ENCODE measurements at regions of chr18 and their contacts with region 1.

Region 1: DNA sequence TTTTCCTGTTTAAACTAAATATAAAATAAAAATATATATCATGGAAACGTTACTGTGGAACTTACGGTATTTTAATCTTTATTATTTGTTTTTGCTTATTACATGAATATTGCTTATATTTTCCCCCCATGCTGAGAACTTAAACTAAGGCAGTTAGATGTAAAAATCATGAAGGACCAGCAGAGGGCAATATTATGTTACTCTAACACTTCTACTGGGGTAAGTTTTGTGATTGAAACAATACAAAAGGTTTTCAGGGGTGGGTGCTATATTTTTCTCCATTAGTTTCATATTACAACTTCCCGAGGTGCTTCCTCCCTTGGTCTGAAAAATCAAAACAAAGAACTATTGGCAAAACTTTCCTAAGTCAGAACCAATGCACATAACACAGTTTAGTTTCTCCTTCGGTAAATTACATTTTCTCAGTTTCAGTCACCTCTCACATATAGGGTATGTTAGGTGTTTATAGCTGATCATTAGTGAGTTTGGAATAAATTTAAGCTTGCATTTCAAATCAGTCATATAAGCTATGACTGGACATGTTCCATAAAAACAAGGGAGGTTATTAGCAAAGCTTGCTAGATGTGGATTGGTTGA is 54.8 kb downstream of the ZNF407 start:
- DNase-seq: no peak
- H3K4me3 Mint-ChIP-seq: no peak overlapping the region
- H3K27ac Mint-ChIP-seq: no peak overlapping the region
- H3K4me1 Mint-ChIP-seq: no peaks in the 10 kb centered on the region
- H3K27me3 Mint-ChIP-seq: no peaks in the 10 kb centered on the region

Region 2: GRCh38 chr18:74806700-74807416 is 154.4 kb after region 1 on chr18:
- intact Hi-C with region 1: loop called (anchors 10 kb)
- DNase-seq: no peak
- H3K4me3 Mint-ChIP-seq: no peak overlapping the region
- H3K27ac Mint-ChIP-seq: no peak overlapping the region
- H3K4me1 Mint-ChIP-seq: peaks cover 9% of the 10 kb centered on the region
- H3K27me3 Mint-ChIP-seq: no peaks in the 10 kb centered on the region

Region 3: DNA sequence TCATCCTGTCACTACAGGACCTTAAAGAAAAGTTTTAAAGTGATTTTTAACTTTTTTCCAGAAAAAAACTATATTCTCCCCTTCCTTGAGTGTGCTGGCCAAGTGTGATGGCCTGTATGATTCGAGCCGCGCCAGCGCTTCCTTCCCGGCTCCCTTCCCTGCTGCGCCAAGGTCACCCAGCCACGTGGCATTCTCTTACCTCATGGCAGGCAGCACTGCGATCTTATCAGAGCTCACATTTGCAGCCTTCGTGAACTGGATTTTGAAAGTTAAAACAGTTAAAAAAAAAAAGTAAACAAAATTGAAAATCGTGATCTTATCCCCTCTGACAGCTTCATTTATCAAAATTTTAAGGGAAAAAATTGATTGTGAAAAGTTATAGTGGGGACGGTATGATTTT is 276.6 kb after region 1 on chr18:
- intact Hi-C with region 1: no loop called
- DNase-seq: no peak
- H3K4me3 Mint-ChIP-seq: no peak overlapping the region
- H3K27ac Mint-ChIP-seq: no peak overlapping the region
- H3K4me1 Mint-ChIP-seq: no peaks in the 10 kb centered on the region
- H3K27me3 Mint-ChIP-seq: no peaks in the 10 kb centered on the region

Region 4: DNA sequence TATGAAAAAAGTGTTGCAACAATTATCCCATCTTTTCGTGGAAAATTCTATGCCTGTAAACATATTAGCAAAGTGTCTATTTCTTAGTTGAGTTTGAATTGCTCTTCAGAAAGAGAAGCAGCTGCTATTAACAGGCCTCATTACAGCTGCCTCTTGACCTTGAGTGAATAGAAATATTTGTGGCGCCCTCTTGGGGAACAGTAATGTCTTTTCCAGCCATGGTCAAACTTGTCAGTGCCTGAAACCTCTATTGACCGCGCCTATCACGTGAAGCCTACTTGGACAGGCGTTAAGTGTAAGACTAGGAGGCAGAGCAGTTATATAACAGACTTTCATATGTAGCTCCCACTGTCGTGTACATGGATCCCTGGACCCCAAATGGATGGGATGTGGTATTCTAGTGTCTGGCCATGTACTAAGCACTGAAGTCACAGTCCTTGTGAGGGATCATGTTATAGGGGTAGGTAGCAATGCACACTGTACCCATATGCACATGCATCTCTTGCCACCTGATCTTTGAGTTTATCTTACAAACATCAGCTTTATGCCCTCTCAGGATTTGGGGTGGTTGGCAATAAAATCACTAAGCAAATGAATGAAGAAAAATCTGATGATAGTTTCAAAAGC is 311.4 kb after region 1 on chr18:
- intact Hi-C with region 1: loop called (anchors 2 kb)
- DNase-seq: peak; percentile 70
- H3K4me3 Mint-ChIP-seq: no peak overlapping the region
- H3K27ac Mint-ChIP-seq: no peak overlapping the region
- H3K4me1 Mint-ChIP-seq: no peaks in the 10 kb centered on the region
- H3K27me3 Mint-ChIP-seq: no peaks in the 10 kb centered on the region

Region 5: DNA sequence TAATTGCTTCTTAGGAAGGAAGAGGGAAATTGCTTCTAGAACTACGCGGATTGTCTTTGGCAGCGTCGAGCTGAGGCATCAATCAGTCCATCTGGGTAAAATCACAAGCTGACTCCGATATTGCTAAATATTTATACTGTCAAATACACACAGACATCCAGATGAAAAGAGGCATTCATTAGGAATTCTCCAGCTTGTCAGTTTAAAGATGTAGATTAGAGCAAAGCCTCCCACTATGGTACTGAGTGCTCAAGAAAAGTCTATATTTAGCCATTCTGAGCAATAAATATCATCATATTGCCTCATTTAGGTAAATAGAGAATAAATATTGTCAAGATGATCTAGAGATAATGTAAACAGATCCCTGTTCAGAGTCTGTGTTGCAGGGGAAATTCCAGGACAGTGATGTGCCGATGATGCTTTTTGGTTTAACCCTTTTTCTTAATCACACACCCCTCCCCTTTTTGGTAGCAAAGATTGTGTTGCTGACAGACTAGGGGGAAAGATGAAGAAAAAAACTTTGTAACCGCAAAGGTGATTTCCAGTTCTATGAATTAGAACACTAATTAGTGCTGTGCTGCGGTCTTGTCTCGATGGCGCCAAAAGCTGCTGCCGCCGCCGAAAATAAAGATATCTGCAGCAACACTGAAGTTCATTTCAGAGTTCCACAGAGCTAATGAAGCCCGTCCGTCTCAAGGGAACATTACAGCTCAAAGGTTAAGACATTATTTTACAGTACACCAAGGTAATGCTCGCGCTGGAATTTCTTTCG is 384.6 kb after region 1 on chr18:
- intact Hi-C with region 1: loop called (anchors 5 kb)
- DNase-seq: no peak
- H3K4me3 Mint-ChIP-seq: no peak overlapping the region
- H3K27ac Mint-ChIP-seq: no peak overlapping the region
- H3K4me1 Mint-ChIP-seq: peaks cover 2% of the 10 kb centered on the region
- H3K27me3 Mint-ChIP-seq: no peaks in the 10 kb centered on the region

Region 6: DNA sequence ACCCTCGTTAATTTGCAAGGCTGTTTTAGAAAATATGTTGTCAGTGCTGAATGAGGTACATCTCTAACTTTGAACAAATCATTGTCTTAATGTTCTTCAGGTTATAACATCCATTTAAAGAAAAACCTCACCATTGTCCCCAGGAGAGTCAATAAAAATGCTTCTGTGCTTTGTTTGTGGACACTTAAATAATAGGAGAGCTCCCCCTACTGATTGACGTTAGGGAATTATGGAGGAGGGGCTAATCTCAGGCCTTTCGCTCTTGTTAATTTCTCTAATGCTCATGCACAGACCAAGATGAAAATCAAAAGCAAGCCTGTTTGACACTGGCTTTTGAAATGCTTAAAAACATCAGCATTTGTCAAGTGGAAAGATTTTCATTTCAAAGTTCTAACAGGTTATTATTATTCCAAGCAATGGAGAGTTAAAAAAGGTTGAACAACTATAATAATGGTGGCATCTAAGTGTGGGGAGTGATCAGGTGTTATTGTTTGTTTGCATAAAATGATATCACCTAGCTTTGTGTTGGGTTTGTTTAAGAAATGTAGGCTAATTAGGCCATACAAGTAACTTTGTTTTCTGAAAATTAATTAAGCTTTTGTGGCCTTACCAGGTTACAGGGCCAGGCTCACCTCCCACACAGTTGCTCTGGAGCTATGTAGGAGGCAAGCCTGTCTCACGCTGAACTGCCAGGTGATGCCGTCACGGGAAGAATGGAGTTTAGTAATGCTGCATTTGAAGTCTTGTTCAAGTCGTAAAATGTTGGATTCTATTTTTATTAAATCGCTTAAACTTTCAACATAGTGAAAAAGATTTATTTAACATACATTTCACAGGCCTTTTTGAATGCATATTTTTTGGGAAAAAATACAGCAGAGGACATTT is 826.7 kb after region 1 on chr18:
- intact Hi-C with region 1: loop called (anchors 2 kb)
- DNase-seq: peak; percentile 61
- H3K4me3 Mint-ChIP-seq: no peak overlapping the region
- H3K27ac Mint-ChIP-seq: no peak overlapping the region
- H3K4me1 Mint-ChIP-seq: no peaks in the 10 kb centered on the region
- H3K27me3 Mint-ChIP-seq: peaks cover 11% of the 10 kb centered on the region

Region 7: GRCh38 chr18:75727456-75727855 is 1075.0 kb after region 1 on chr18:
- intact Hi-C with region 1: loop called (anchors 10 kb)
- DNase-seq: peak; percentile 74
- H3K4me3 Mint-ChIP-seq: no peak overlapping the region
- H3K27ac Mint-ChIP-seq: no peak overlapping the region
- H3K4me1 Mint-ChIP-seq: no peaks in the 10 kb centered on the region
- H3K27me3 Mint-ChIP-seq: peaks cover 2% of the 10 kb centered on the region

Region 8: DNA sequence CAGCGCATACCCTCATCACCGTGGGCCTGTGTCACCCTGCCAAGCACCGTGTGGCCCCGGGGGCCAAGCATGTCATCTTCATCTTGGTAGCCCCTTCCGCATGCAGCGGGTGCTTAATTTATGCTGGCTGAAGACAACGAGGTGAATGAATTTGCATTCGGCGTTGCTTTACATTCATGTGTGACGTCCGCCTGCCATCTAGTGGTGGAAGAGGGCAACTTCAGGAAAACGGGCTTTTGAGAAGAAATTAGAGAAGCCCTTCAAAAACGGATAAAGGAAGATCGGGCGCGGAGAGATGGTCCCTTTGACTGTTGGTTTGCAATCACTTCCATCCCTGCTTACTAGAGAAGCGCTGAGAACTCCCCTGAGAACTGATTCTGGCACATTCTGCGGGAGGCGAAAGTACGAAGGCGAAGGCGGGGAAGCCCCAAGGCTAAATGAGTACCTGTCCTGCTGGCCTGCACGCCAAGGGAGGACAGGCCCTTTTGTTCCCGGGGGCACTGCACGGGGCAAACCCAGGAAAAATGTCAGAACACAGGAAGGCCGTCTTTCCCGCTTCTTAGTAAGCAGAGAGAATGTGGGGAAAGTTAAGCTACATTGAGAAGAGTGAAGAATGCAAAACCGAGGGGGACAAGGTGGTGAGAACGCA is 1696.7 kb after region 1 on chr18:
- intact Hi-C with region 1: loop called (anchors 10 kb)
- DNase-seq: peak; percentile 90
- H3K4me3 Mint-ChIP-seq: peak overlapping the region; percentile 6
- H3K27ac Mint-ChIP-seq: no peak overlapping the region
- H3K4me1 Mint-ChIP-seq: peaks cover 2% of the 10 kb centered on the region
- H3K27me3 Mint-ChIP-seq: no peaks in the 10 kb centered on the region